ENCODE measurements at regions of chr3 and their contacts with region 1.

Region 1: GRCh38 chr3:167350245-167350862 is 29.7 kb downstream of the ZBBX start:
- DNase-seq: no peak
- ATAC-seq: no peak
- H3K4me3 ChIP-seq: no peak overlapping the region
- H3K27ac ChIP-seq: no peak overlapping the region
- H3K4me1 ChIP-seq: no peaks in the 10 kb centered on the region
- H3K27me3 ChIP-seq: no peaks in the 10 kb centered on the region
- CTCF ChIP-seq: peak; percentile 33 to 68 (median 65)
- POLR2A ChIP-seq: no peak

Region 2: GRCh38 chr3:165854696-165855095 is 1495.7 kb before region 1 on chr3:
- in situ Hi-C with region 1: no loop called
- intact Hi-C with region 1: loop called (anchors 5 kb)
- DNase-seq: no peak
- ATAC-seq: no peak
- H3K4me3 ChIP-seq: no peak overlapping the region
- H3K27ac ChIP-seq: no peak overlapping the region
- H3K4me1 ChIP-seq: no peaks in the 10 kb centered on the region
- H3K27me3 ChIP-seq: no peaks in the 10 kb centered on the region
- CTCF ChIP-seq: peak in 2 of 5 experiments; percentile 10 to 41
- POLR2A ChIP-seq: no peak

Region 3: GRCh38 chr3:166837535-166837934 is 512.8 kb before region 1 on chr3:
- in situ Hi-C with region 1: no loop called
- intact Hi-C with region 1: loop called (anchors 5 kb)
- DNase-seq: no peak
- ATAC-seq: no peak
- H3K4me3 ChIP-seq: no peak overlapping the region
- H3K27ac ChIP-seq: no peak overlapping the region
- H3K4me1 ChIP-seq: no peaks in the 10 kb centered on the region
- H3K27me3 ChIP-seq: no peaks in the 10 kb centered on the region
- CTCF ChIP-seq: no peak
- POLR2A ChIP-seq: no peak

Region 4: DNA sequence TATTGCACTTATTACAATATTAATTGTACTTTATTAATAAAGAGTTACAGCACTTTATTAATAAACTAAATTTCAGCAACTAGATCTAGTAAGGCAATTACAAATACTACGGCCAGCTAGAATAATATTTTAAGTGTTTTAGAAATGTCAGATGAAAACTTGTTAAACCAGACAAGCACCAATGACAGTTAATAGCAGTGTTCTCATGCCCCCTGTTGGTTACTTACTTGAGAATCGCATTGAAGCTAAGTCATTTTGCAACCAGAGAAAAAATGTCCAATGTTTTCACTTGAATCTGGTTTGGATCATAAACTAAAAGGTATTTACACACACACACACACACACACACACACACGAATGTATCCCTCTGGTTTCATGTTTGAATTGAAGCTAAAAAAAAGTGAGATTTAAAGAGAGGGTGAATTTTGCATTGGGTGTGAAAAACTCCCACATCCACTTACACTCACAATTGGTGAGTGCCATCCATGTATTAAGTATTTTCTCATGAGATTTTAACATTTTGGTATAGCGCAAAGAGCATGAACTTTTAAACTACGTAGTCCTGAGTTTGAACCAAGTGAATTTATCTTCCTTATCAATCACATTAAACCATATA is 318.0 kb before region 1 on chr3:
- in situ Hi-C with region 1: no loop called
- intact Hi-C with region 1: no loop called
- DNase-seq: no peak
- ATAC-seq: no peak
- H3K4me3 ChIP-seq: no peak overlapping the region
- H3K27ac ChIP-seq: no peak overlapping the region
- H3K4me1 ChIP-seq: no peaks in the 10 kb centered on the region
- H3K27me3 ChIP-seq: no peaks in the 10 kb centered on the region
- CTCF ChIP-seq: no peak
- POLR2A ChIP-seq: no peak